ENCODE measurements at regions of chr1 and their contacts with region 1.

Region 1: DNA sequence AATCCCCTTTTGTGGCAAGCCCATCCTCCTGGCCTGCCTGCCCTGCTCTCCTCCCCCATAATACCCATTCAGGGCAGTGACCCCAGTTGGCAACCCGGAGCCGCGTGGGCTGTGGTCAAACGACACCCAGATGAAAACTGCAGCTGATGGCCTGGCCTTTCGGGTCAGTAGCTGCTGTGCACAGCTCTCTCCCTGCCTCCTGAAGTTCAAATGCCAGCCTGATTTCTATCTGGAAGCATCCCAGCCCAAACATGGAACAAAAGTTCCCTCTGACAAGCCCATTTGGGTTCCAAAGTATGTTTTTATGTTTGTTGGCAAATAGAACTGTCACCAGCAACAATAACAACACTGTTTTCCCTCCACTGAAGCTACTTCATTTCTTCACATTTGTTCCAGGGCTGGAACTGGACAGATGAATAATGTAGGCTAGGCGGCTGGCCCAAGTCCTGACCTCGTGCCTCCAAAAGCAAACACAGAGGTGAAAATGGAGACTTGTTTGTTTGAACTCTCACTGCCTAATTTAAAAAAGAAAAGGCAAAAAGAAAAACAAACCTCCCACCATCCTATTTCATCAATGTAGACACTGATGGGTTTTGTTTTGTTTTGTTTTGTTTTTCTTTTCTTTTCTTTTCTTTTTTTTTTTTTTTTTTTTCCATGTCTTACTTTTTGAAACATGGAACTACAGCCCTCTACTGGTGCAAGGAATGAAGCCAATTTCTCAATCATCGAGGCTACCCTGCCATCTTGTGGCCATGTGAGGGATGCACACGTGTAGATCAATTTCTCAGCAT is 179.0 kb downstream of the ADSS2 start:
- DNase-seq: peak; percentile 75 to 77
- H3K4me3 ChIP-seq: no peak overlapping the region
- H3K27ac ChIP-seq: peak overlapping the region; percentile 42 to 75
- H3K4me1 ChIP-seq: no peaks in the 10 kb centered on the region
- H3K27me3 ChIP-seq: no peaks in the 10 kb centered on the region
- CTCF ChIP-seq: peak; percentile 90 to 98 (median 96)
- POLR2A ChIP-seq: no peak

Region 2: GRCh38 chr1:243325305-243325890 is 947.3 kb before region 1 on chr1:
- intact Hi-C with region 1: no loop called
- DNase-seq: no peak
- H3K4me3 ChIP-seq: no peak overlapping the region
- H3K27ac ChIP-seq: no peak overlapping the region
- H3K4me1 ChIP-seq: no peaks in the 10 kb centered on the region
- H3K27me3 ChIP-seq: no peaks in the 10 kb centered on the region
- CTCF ChIP-seq: peak; percentile 69 to 80 (median 78)
- POLR2A ChIP-seq: no peak

Region 3: GRCh38 chr1:243343970-243344937 is 928.4 kb before region 1 on chr1:
- intact Hi-C with region 1: loop called (anchors 5 kb)
- DNase-seq: no peak
- H3K4me3 ChIP-seq: no peak overlapping the region
- H3K27ac ChIP-seq: no peak overlapping the region
- H3K4me1 ChIP-seq: no peaks in the 10 kb centered on the region
- H3K27me3 ChIP-seq: no peaks in the 10 kb centered on the region
- CTCF ChIP-seq: peak; percentile 68 to 76 (median 70)
- POLR2A ChIP-seq: no peak

Region 4: DNA sequence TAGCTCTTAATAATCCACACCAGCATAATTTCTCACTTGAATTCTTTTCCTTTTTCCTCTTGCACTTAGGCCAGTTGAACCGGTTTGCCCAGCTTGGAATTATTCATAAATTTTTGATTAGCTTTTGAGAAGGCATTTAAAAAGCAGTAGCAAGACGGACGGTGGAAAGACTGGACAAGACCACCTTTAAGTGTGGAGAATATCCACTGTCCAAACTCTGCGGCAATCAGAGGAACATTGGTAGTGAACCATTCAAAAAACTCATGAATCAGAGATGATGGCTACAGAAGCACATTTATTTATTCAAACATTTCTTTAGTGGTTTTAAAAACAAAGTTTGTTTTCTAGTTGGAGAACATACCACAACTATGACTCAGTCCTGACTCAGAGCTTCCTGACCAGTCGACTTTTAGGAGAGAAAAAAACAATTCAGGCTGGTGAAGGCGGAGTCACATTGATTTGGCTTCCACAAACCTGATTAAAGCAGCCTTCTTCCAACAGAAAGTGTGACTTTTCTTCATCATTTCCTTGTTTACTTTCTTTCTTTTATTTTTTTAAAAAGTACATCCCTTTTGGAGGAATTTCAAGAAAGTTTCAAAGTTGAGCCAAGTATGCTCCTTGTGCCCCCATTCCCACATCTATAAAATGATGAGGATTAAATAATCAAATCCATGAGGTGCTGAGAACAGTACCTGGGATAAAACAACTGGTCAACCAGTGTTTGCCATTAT is 50.3 kb after region 1 on chr1:
- intact Hi-C with region 1: no loop called
- DNase-seq: peak in 1 of 2 donors; percentile 61
- H3K4me3 ChIP-seq: no peak overlapping the region
- H3K27ac ChIP-seq: peak overlapping the region; percentile 76 to 88
- H3K4me1 ChIP-seq: no peaks in the 10 kb centered on the region
- H3K27me3 ChIP-seq: no peaks in the 10 kb centered on the region
- CTCF ChIP-seq: peak in 1 of 4 experiments; percentile 7
- POLR2A ChIP-seq: no peak